Head of caudate nucleus (tissue), 42 donors: ENCODE measurements at regions of chr1 and their contacts with region 1.

Region 1: DNA sequence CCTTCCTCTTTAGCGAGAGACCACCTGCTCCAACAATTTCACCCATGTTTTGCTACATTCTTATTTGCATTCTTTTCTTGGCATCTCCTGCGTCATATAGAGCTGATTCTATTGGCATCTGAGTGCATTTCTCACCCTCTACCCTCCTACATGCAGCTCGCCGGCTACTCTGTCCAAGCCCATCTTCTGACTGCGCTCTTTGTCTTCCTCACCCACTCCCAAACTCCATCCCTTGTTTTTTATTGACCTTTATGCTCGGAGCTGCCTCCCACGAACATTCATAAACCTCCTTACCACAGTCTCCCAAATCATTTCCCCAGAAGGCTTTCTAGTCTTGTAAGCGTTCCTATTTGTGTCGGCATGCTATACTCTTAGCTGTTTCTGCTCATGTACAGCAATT is 33.6 kb upstream of the FMN2 start:
- DNase-seq: no peak

Region 2: DNA sequence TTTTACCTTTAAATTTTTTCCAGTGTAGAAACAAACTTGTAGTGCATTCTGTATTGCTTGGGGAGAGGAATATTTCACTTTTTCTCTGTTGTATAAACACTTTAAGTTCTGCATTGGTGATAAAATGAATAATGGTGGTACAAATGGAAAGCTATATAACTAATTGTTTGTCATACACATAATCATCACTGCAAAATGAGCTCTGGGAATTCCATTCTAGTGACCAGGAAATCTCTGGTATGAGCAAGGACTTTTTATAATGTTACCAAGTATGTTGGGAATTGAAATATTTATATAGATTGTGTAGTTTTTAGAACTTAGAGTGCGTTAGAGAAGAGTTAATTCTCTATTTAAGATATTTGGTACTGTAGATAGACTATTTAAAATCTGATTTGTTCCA is 28.7 kb after region 1 on chr1:
- intact Hi-C with region 1: loop called (anchors 2 kb)
- DNase-seq: no peak